ENCODE measurements at regions of chr10 and their contacts with region 1.

Region 1: DNA sequence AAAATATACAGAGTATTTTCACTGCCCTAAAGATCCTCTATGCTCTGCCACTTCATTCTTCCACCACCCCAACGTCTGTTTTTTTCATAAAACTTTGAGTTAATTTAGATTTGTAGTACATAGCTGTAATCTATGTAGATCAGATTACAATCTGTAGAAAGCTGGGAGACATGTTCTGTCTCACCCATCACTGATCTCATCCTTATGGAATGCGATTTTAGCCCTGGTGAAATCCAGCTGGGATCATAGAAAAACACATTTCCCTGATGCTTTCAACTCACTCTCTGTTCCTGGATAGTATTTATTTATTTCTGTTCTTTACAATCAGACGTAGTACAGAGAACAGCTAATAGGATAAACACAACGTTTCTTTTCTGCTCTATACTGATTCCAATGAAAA is 521.0 kb downstream of the KIF20B start:
- DNase-seq: peak; percentile 84
- H3K4me3 ChIP-seq: peak overlapping the region in 2 of 3 experiments; percentile 6 to 18
- H3K27ac ChIP-seq: peak overlapping the region; percentile 98
- H3K4me1 ChIP-seq: peaks cover 43% of the 10 kb centered on the region
- H3K27me3 ChIP-seq: no peaks in the 10 kb centered on the region
- CTCF ChIP-seq: no peak

Region 2: DNA sequence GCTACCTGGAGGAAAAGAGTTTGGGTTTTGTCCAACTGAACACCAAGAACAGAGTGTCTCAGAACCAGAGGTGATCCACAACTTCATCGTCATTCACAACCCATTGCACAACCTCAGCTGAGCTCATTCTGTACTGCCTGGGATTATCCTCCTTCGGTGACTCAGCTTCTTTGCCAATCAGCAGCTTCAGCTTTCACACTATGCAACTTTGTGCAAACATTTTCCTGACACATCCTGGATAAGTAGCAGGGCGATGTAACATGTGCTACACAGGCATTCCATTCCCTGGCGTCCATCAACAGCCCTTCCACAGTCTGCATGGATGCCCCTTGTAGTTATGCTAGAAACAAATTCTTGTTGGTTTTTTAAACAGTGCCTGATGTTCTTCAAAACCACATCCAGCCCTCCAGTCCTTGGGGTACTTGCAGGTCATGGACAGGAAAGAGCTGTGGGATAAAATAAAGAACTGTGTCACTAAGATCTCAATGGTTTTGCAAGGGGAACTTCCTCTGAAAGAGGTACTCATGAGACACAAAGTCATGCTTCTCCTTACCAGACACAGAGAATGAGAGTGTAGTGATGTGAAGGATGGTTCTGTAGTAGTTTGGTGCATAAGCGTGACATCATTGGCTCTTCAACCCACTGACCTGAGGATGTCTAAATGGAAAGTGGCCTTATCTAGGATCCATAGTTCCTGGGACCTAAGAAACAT is 42.5 kb before region 1 on chr10:
- CTCF ChIA-PET with region 1: no interaction called
- dilution Hi-C with region 1: no loop called
- in situ Hi-C with region 1: no loop called
- intact Hi-C with region 1: loop called (anchors 5 kb)
- DNase-seq: peak; percentile 97
- H3K4me3 ChIP-seq: no peak overlapping the region
- H3K27ac ChIP-seq: peak overlapping the region; percentile 53
- H3K4me1 ChIP-seq: peaks cover 30% of the 10 kb centered on the region
- H3K27me3 ChIP-seq: no peaks in the 10 kb centered on the region
- CTCF ChIP-seq: no peak

Region 3: GRCh38 chr10:90983914-90984549 is 761.7 kb after region 1 on chr10:
- CTCF ChIA-PET with region 1: no interaction called
- dilution Hi-C with region 1: no loop called
- in situ Hi-C with region 1: no loop called
- intact Hi-C with region 1: no loop called
- DNase-seq: no peak
- H3K4me3 ChIP-seq: no peak overlapping the region
- H3K27ac ChIP-seq: no peak overlapping the region
- H3K4me1 ChIP-seq: no peaks in the 10 kb centered on the region
- H3K27me3 ChIP-seq: peaks cover 2% of the 10 kb centered on the region
- CTCF ChIP-seq: no peak